ENCODE measurements at regions of chr21 and their contacts with region 1.

Region 1: DNA sequence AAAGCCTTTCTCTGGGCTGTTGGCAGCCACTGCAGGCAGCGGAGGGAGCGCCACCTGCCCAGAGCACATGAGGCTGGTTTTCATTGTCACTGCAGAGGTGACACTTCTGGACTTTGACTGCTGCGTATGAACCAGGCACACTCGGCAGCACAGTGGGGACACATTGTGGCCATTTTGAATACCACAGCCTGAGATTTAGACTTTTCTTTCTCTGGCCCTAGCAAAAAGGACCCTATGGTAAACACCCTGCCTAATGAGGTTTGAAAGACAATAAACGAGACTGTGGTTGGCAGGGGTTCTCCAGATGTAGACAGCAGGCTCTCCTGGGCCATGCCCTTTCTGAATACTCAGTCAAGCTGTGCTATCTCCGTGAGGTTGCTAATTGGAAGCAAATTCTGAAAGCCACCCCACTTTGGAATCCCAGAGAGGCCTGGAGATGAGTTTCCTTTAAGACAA is 12.0 kb upstream of the KCNE2 start:
- DNase-seq: peak; percentile 57
- ATAC-seq: peak; percentile 82

Region 2: GRCh38 chr21:33924079-33924765 is 427.6 kb before region 1 on chr21:
- intact Hi-C with region 1: loop called (anchors 2 kb)
- DNase-seq: peak; percentile 92
- ATAC-seq: peak; percentile 98

Region 3: DNA sequence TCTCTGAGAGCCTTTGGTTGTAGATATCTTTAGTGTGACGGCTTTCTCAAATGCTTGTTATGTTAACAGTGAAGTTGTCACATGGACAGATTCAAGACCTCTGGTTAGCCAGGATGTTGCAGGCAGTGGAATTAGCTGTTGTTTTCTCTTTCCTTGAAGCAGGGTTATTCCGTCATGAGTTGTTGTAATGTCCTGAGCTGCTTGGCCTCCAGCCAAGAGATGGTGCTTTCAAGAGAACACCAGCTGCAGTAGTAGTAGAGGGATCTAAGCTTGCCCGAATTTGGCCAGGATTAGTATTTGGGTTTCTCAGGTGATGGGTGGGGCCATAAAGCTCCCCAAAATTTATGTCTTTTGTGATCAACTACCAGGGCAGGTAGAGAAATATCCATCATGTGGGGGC is 146.8 kb after region 1 on chr21:
- intact Hi-C with region 1: no loop called
- DNase-seq: no peak
- ATAC-seq: peak; percentile 48